ENCODE measurements at regions of chr6 and their contacts with region 1.

Region 1: GRCh38 chr6:32825966-32826365 is 9.2 kb upstream of the HLA-DOB start:
- DNase-seq: no peak
- H3K4me3 Mint-ChIP-seq: no peak overlapping the region
- H3K27ac Mint-ChIP-seq: no peak overlapping the region
- H3K4me1 Mint-ChIP-seq: peaks cover 25% of the 10 kb centered on the region
- H3K27me3 Mint-ChIP-seq: no peaks in the 10 kb centered on the region

Region 2: DNA sequence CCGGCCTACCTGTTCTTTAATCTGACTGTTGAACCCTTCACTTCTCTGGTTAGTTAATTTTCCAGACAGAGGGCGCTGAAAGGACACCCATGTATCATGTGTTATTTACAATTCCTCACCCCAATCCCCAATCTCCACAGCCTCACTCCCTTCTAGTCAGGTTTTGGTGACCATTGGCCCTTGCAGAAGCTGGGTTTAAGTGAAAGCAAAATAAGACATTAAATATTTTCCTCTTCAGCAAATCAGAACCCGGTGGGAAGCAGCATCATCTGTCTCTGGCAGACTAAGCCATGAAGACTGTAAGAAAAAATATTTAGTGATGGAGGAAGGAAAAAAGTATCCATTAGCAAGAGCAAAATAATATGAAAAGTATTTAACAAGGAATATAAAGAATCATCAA is 198.1 kb before region 1 on chr6:
- CTCF ChIA-PET with region 1: no interaction called
- POLR2A ChIA-PET with region 1: no interaction called
- DNase-seq: peak; percentile 21
- H3K4me3 Mint-ChIP-seq: no peak overlapping the region
- H3K27ac Mint-ChIP-seq: peak overlapping the region; percentile 50
- H3K4me1 Mint-ChIP-seq: peaks cover 35% of the 10 kb centered on the region
- H3K27me3 Mint-ChIP-seq: peaks cover 2% of the 10 kb centered on the region

Region 3: DNA sequence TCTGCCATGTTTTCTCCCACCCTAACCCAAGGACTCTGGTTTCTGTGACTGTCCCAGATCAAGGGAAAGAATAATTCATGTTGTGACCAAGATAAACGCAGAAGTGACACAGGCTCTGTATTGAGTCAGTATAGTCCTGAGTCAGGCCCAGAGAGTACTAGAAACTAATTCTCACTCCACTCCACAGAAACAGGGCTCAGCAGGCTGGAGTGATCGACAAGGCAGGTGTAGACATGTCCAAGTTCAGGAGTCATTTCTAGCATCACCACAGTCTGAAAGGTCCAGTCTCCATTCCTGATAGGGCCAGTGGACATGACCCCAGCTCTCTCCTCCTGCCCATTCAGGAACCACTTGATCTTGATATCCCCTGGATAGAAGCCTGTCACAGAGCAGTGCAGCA is 11.8 kb before region 1 on chr6:
- CTCF ChIA-PET with region 1: no interaction called
- POLR2A ChIA-PET with region 1: interaction called, 11 read pairs
- DNase-seq: no peak
- H3K4me3 Mint-ChIP-seq: no peak overlapping the region
- H3K27ac Mint-ChIP-seq: no peak overlapping the region
- H3K4me1 Mint-ChIP-seq: no peaks in the 10 kb centered on the region
- H3K27me3 Mint-ChIP-seq: peaks cover 2% of the 10 kb centered on the region

Region 4: GRCh38 chr6:32853541-32854375 is 27.8 kb after region 1 on chr6 and contains the starts of genes PSMB9 and TAP1:
- CTCF ChIA-PET with region 1: interaction called, 11 read pairs
- POLR2A ChIA-PET with region 1: interaction called, 1,055 read pairs
- DNase-seq: peak; percentile 95
- H3K4me3 Mint-ChIP-seq: peak within 1 kb of the TSS; percentile 100
- H3K27ac Mint-ChIP-seq: peak within 1 kb of the TSS; percentile 99
- H3K4me1 Mint-ChIP-seq: peaks cover 59% of the 10 kb centered on the region
- H3K27me3 Mint-ChIP-seq: no peaks in the 10 kb centered on the region
- total RNA-seq, gene PSMB9: 368 to 372 TPM
- total RNA-seq, gene TAP1: 410 to 412 TPM

Measured in activated CD4-positive, alpha-beta memory T cell treated with anti-CD3 and anti-CD28 coated beads, Interleukin-2, amount 10 ng/mL, durations not matched to agents 7 days and 5 days (primary cell).